H1 (cell line): ENCODE measurements at regions of chr4 and their contacts with region 1.

Region 1: GRCh38 chr4:56387023-56388001 is at the start of gene AASDH:
- DNase-seq: peak; percentile 79 to 99
- H3K4me3 ChIP-seq: peak within 1 kb of the TSS; percentile 69 to 94 (median 88)
- H3K27ac ChIP-seq: peak within 1 kb of the TSS; percentile 98
- H3K4me1 ChIP-seq: peaks cover 0 to 5% (median 0%) of the 10 kb centered on the region in 4 experiments; a peak in 1 of 7 replicates
- H3K27me3 ChIP-seq: no peaks in the 10 kb centered on the region
- CTCF ChIP-seq: no peak
- EP300 ChIP-seq: no peak
- POLR2A ChIP-seq: peak; percentile 95 to 99
- RAD21 ChIP-seq: no peak; a peak in 1 of 4 replicates
- total RNA-seq, gene AASDH: 10.9 and 13.3 TPM in 2 replicates

Region 2: DNA sequence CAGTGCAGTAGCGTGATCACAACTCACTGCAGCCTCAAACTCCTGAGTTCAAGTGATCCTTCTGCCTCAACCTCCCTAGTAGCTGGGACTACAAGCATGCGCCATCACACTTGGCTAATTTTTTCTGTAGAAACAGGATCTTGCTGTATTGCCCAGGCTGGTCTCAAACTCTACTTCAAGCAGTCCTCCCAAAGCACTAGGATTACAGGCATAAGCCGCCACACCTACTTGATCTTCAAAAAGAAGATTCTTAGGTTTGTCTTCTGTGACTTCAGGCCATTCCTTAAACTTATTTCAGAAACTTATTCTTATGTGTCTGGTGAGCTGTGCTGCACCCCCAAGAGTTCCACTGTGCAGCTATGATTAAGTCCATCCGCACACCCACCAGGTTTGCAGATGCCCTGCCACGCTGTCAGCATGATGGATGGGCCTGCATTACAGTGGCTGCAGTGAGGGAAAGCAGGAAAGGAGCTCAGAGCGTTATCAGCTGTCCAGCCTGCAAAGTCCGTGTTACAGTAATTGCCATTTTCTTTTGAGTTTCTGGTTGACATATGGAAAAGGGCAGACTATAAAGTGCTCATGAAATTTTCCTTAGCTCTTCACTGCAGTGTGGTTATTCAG is 146.6 kb before region 1 on chr4:
- CTCF ChIA-PET with region 1: no interaction called
- POLR2A ChIA-PET with region 1: no interaction called
- DNase-seq: no peak
- H3K4me3 ChIP-seq: no peak overlapping the region
- H3K27ac ChIP-seq: no peak overlapping the region
- H3K4me1 ChIP-seq: peaks cover 0 to 3% (median 1%) of the 10 kb centered on the region in 4 experiments; a peak in 3 of 7 replicates
- H3K27me3 ChIP-seq: no peaks in the 10 kb centered on the region
- CTCF ChIP-seq: no peak
- EP300 ChIP-seq: no peak
- POLR2A ChIP-seq: no peak
- RAD21 ChIP-seq: no peak

Region 3: GRCh38 chr4:56360071-56360470 is 27.2 kb before region 1 on chr4:
- CTCF ChIA-PET with region 1: no interaction called
- POLR2A ChIA-PET with region 1: no interaction called
- DNase-seq: no peak
- H3K4me3 ChIP-seq: no peak overlapping the region
- H3K27ac ChIP-seq: no peak overlapping the region
- H3K4me1 ChIP-seq: no peaks in the 10 kb centered on the region
- H3K27me3 ChIP-seq: no peaks in the 10 kb centered on the region
- CTCF ChIP-seq: no peak
- EP300 ChIP-seq: no peak
- POLR2A ChIP-seq: no peak
- RAD21 ChIP-seq: no peak

Region 4: GRCh38 chr4:56372774-56373173 is 14.5 kb before region 1 on chr4:
- CTCF ChIA-PET with region 1: no interaction called
- POLR2A ChIA-PET with region 1: interaction called, 24 read pairs
- DNase-seq: no peak
- H3K4me3 ChIP-seq: no peak overlapping the region
- H3K27ac ChIP-seq: no peak overlapping the region
- H3K4me1 ChIP-seq: no peaks in the 10 kb centered on the region
- H3K27me3 ChIP-seq: no peaks in the 10 kb centered on the region
- CTCF ChIP-seq: no peak
- EP300 ChIP-seq: no peak
- POLR2A ChIP-seq: no peak
- RAD21 ChIP-seq: no peak

Region 5: GRCh38 chr4:56400560-56400959 is 13.2 kb after region 1 on chr4:
- CTCF ChIA-PET with region 1: no interaction called
- POLR2A ChIA-PET with region 1: interaction called, 15 read pairs
- DNase-seq: no peak
- H3K4me3 ChIP-seq: peak overlapping the region in 1 of 4 experiments; percentile 36; a peak in 1 of 8 replicates
- H3K27ac ChIP-seq: peak overlapping the region; percentile 73
- H3K4me1 ChIP-seq: peaks cover 0 to 4% (median 2%) of the 10 kb centered on the region in 4 experiments; a peak in 2 of 7 replicates
- H3K27me3 ChIP-seq: no peaks in the 10 kb centered on the region
- CTCF ChIP-seq: no peak
- EP300 ChIP-seq: peak in 1 of 2 experiments; percentile 42; a peak in 1 of 3 replicates
- POLR2A ChIP-seq: peak in 1 of 2 experiments; percentile 35; a peak in 1 of 3 replicates
- RAD21 ChIP-seq: no peak

Region 6: GRCh38 chr4:56410235-56411062 is 23.1 kb after region 1 on chr4:
- CTCF ChIA-PET with region 1: no interaction called
- POLR2A ChIA-PET with region 1: interaction called, 20 read pairs
- DNase-seq: peak in 1 of 2 experiments; percentile 36
- H3K4me3 ChIP-seq: peak overlapping the region in 1 of 4 experiments; percentile 30; a peak in 1 of 8 replicates
- H3K27ac ChIP-seq: peak overlapping the region; percentile 64
- H3K4me1 ChIP-seq: peaks cover 0 to 16% (median 2%) of the 10 kb centered on the region in 4 experiments; a peak in 3 of 7 replicates
- H3K27me3 ChIP-seq: no peaks in the 10 kb centered on the region
- CTCF ChIP-seq: no peak
- EP300 ChIP-seq: peak in 1 of 2 experiments; percentile 86; a peak in 1 of 3 replicates
- POLR2A ChIP-seq: peak in 1 of 2 experiments; percentile 51; a peak in 2 of 3 replicates
- RAD21 ChIP-seq: no peak